Left ventricle myocardium superior (tissue), 1 donor: ENCODE measurements at regions of chr12 and their contacts with region 1.

Region 1: DNA sequence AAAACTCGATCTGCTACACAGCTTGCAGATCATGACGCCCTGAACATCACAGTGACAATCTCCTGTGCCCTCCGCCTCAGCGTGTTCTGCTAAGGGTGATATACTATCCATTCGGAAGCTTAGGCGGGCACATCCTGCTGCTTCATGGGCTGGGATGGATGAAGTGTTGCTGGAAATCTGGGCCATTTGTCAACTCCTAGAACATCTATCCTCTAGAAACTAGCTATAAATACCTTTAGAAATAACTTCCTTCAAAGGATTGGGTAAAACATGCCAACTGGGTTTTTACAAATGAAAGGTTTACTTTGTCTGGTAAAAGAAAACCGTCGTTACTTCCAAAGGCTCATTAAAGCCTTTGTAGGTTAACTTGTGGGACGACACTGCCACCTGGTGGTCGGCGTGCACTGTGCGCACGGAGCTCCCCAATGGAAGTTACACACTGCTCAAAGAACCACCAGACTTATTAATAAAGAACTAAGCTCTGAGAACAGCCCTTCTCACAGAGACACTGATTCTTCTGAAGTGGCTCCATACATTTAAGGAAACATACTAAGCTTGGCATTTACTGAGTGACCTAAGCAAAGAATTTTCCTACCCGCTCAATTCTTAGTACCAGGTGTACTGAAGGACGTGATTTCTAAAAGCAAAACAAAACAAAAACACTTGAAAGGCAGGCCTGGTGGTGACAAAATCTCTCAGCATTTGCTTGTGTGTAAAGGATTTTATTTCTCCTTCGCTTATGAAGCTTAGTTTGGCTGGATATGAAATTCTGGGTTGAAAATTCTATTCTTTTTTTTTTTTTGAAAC is 21.6 kb upstream of the CACNA2D4 start:
- DNase-seq: peak; percentile 92
- ATAC-seq: peak; percentile 75

Region 2: GRCh38 chr12:1650260-1650977 is 289.6 kb before region 1 on chr12:
- intact Hi-C with region 1: loop called (anchors 10 kb)
- DNase-seq: no peak
- ATAC-seq: peak; percentile 87

Region 3: DNA sequence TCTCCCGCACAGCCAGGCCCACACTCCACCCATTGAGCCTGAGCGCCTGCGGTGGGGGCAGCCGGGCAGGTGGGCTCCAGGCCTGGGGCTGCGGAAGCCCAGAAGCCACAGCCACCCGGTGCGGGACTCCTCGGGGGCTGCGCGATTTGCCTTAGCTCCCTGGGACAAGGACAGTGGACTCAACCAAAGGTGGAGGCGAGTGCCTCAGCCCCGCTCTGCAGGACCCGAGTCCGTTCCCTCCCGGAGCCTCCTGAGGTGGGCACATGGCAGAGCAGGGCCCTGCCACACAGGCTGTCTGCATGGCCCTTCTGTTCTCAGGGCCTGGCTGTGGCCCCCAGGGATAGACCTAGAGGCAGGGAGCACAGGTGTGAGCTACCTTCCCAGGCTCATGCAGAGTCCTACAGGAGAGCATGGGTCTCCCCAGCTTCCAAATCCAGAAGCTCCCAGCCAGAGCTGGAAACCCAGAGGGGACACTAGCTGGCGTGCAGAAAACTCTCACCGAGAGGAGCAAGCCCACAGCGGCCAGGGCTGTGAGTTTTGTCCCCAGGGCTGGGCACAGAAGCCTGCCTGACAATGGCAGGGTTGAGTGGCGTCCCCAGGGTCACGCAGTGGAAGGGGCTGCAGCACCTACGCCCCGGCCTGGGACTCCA is 141.9 kb before region 1 on chr12:
- intact Hi-C with region 1: loop called (anchors 2 kb)
- DNase-seq: peak; percentile 32
- ATAC-seq: no peak

Region 4: DNA sequence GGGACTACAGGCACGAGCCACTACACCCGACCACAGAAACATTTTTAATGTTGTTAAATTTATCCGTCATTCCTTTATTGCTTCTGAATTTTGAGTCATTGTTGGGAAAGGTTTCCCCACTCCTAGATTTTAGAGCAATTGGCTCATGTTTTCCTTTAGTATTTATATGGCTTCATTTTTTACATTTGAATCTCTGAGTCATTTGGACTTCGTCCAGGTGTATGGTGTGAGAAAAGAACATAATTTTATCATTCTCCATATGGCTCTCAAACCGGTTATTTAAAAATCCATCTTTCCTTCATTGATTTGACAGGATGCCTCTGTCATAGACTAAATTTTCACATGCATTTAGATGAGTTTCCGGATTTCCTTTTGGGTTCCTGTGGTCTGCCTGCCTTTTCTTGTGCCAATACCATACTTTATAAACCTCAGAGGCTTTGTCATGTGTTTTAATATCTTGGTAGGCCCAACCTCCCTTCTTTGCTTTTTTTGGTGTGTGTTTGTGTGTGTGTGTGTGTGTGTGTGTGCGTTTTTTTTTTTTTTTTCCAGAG is 88.8 kb before region 1 on chr12:
- intact Hi-C with region 1: no loop called
- DNase-seq: no peak
- ATAC-seq: no peak